ENCODE measurements at regions of chr12 and their contacts with region 1.

Region 1: GRCh38 chr12:2795291-2796186 is 769 bp downstream of the FKBP4 start:
- DNase-seq: no peak
- H3K4me3 ChIP-seq: peak overlapping the region; percentile 92
- H3K27ac ChIP-seq: peak overlapping the region; percentile 21
- H3K27me3 ChIP-seq: peaks cover 13% of the 10 kb centered on the region
- CTCF ChIP-seq: 0 out of 2 replicates have a peak, but pooled peaks have one; percentile 1

Region 2: GRCh38 chr12:2783936-2784600 is 11.5 kb before region 1 on chr12:
- CTCF ChIA-PET with region 1: interaction called, 10 read pairs
- POLR2A ChIA-PET with region 1: no interaction called
- DNase-seq: no peak
- H3K4me3 ChIP-seq: no peak overlapping the region
- H3K27ac ChIP-seq: no peak overlapping the region
- H3K27me3 ChIP-seq: peaks cover 39% of the 10 kb centered on the region
- CTCF ChIP-seq: peak; percentile 89

Region 3: GRCh38 chr12:2812290-2813213 is 17.0 kb after region 1 on chr12 and contains the start of gene ITFG2:
- CTCF ChIA-PET with region 1: interaction called, 15 read pairs
- POLR2A ChIA-PET with region 1: interaction called, 10 read pairs
- DNase-seq: peak; percentile 94
- H3K4me3 ChIP-seq: peak within 1 kb of the TSS; percentile 98
- H3K27ac ChIP-seq: peak within 1 kb of the TSS; percentile 96
- H3K27me3 ChIP-seq: no peaks in the 10 kb centered on the region
- CTCF ChIP-seq: no peak
- polyA plus RNA-seq, gene ITFG2: 17.4 and 18.6 TPM in 2 replicates

Measured in AG04450 (cell line).